ENCODE measurements at regions of chr14 and their contacts with region 1.

Region 1: GRCh38 chr14:20697273-20698017 is 8.9 kb downstream of the ANG start:
- DNase-seq: peak; percentile 61
- CTCF ChIP-seq: peak; percentile 84

Region 2: GRCh38 chr14:20539906-20540305 is 157.5 kb before region 1 on chr14:
- CTCF ChIA-PET with region 1: no interaction called
- POLR2A ChIA-PET with region 1: no interaction called
- DNase-seq: no peak
- CTCF ChIP-seq: no peak

Region 3: DNA sequence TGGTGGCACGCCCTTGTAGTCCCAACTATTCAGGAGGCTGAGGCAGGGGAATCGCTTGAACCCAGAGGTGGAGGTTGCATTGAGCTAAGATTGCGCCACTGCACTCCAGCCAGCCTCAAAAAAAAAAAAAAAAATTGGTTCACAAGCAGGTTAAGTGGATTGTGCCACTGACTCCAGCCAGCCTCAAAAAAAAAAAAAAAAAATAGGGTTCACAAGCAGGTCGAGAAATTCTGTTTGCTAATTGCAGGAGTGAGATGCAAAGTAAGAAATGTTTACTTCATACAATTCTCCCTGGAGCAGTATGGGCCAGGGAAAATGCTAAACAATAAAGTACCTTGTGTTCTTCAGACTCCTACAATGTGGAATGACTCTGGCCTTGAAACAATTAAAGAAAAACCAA is 76.9 kb after region 1 on chr14:
- CTCF ChIA-PET with region 1: no interaction called
- POLR2A ChIA-PET with region 1: no interaction called
- DNase-seq: no peak
- CTCF ChIP-seq: no peak

Region 4: GRCh38 chr14:20799892-20800544 is 102.6 kb after region 1 on chr14:
- CTCF ChIA-PET with region 1: no interaction called
- POLR2A ChIA-PET with region 1: no interaction called
- DNase-seq: no peak
- CTCF ChIP-seq: no peak

Region 5: DNA sequence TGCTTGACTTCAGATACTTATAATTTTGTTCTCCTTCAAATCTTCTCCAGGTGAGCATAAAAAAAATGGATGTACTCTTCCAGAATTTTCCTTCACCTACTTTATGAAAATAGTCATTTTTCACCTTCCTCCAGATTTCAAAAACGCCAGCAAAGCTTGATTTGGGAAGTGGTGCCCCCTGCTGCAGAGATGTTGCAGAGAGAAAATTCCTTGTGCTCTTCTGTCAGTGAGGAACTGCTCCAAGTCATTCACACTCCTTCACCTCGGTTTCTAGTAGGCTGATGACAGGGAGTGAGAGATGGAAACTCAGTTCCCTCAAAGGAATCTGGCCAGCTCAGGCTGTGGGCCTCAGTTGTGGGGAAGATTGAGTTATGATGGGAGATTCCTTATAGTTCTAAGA is 169.5 kb after region 1 on chr14:
- CTCF ChIA-PET with region 1: interaction called, 32 read pairs
- POLR2A ChIA-PET with region 1: no interaction called
- DNase-seq: no peak
- CTCF ChIP-seq: peak; percentile 34

Region 6: GRCh38 chr14:20873370-20874177 is 176.1 kb after region 1 on chr14:
- CTCF ChIA-PET with region 1: interaction called, 32 read pairs
- POLR2A ChIA-PET with region 1: no interaction called
- DNase-seq: peak; percentile 62
- CTCF ChIP-seq: peak; percentile 79